Activated CD4-positive, alpha-beta memory T cell treated with anti-CD3 and anti-CD28 coated beads for 36 hours (primary cell): ENCODE measurements at regions of chr3 and their contacts with region 1.

Region 1: GRCh38 chr3:149717391-149718056 is 34.8 kb downstream of the COMMD2 start:
- DNase-seq: peak; percentile 39
- H3K4me3 Mint-ChIP-seq: no peak overlapping the region
- H3K27ac Mint-ChIP-seq: no peak overlapping the region
- H3K4me1 Mint-ChIP-seq: peaks cover 2% of the 10 kb centered on the region
- H3K27me3 Mint-ChIP-seq: peaks cover under 1% of the 10 kb centered on the region

Region 2: DNA sequence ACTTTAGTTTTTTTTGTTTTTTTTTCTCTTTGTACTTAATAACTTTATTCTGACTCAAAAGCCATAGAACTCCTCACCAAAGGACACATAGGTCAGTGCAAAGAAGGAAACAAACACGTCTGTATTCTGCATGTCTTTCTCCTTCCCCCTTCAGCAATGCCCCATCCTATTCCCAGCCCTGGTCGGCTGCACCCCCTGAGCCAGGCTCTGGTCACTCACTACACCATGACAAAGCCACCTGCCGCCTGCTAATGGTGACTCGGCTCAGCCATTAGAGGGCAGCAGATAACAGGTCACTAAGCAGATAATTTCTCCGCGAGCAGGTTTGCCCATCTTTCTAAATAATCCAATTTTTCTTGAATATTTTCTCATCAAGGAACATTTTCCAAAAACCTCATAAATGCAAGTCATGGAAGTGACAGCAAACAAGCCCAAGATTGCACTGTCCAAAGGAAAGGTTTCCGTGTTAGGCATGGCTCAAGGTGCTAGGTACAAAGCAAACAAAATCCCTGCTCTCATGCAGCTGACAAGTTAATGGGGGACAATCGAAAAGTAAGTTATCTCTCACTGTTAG is 205.2 kb before region 1 on chr3:
- CTCF ChIA-PET with region 1: interaction called, 6 read pairs
- POLR2A ChIA-PET with region 1: no interaction called
- intact Hi-C with region 1: loop called (anchors 1 kb)
- DNase-seq: peak; percentile 51
- H3K4me3 Mint-ChIP-seq: no peak overlapping the region
- H3K27ac Mint-ChIP-seq: no peak overlapping the region
- H3K4me1 Mint-ChIP-seq: peaks cover 10% of the 10 kb centered on the region
- H3K27me3 Mint-ChIP-seq: peaks cover 15% of the 10 kb centered on the region

Region 3: GRCh38 chr3:149536429-149536828 is 181.1 kb before region 1 on chr3:
- CTCF ChIA-PET with region 1: interaction called, 14 read pairs
- POLR2A ChIA-PET with region 1: no interaction called
- intact Hi-C with region 1: no loop called
- DNase-seq: no peak
- H3K4me3 Mint-ChIP-seq: no peak overlapping the region
- H3K27ac Mint-ChIP-seq: no peak overlapping the region
- H3K4me1 Mint-ChIP-seq: no peaks in the 10 kb centered on the region
- H3K27me3 Mint-ChIP-seq: no peaks in the 10 kb centered on the region

Region 4: GRCh38 chr3:149566292-149566975 is 151.1 kb before region 1 on chr3:
- CTCF ChIA-PET with region 1: interaction called, 57 read pairs
- POLR2A ChIA-PET with region 1: no interaction called
- intact Hi-C with region 1: loop called (anchors 1 kb)
- DNase-seq: no peak
- H3K4me3 Mint-ChIP-seq: no peak overlapping the region
- H3K27ac Mint-ChIP-seq: no peak overlapping the region
- H3K4me1 Mint-ChIP-seq: no peaks in the 10 kb centered on the region
- H3K27me3 Mint-ChIP-seq: peaks cover 4% of the 10 kb centered on the region

Region 5: GRCh38 chr3:149657926-149658733 is 59.4 kb before region 1 on chr3 and contains the start of gene WWTR1:
- CTCF ChIA-PET with region 1: no interaction called
- POLR2A ChIA-PET with region 1: no interaction called
- intact Hi-C with region 1: loop called (anchors 2 kb)
- DNase-seq: peak; percentile 65
- H3K4me3 Mint-ChIP-seq: peak within 1 kb of the TSS; percentile 82
- H3K27ac Mint-ChIP-seq: no peak within 1 kb of the TSS
- H3K4me1 Mint-ChIP-seq: peaks cover 9% of the 10 kb centered on the region
- H3K27me3 Mint-ChIP-seq: peaks cover 51% of the 10 kb centered on the region
- total RNA-seq, gene WWTR1: 1.0 to 1.2 TPM

Region 6: GRCh38 chr3:150348500-150348899 is 631.0 kb after region 1 on chr3:
- CTCF ChIA-PET with region 1: no interaction called
- POLR2A ChIA-PET with region 1: no interaction called
- intact Hi-C with region 1: no loop called
- DNase-seq: peak; percentile 47
- H3K4me3 Mint-ChIP-seq: no peak overlapping the region
- H3K27ac Mint-ChIP-seq: no peak overlapping the region
- H3K4me1 Mint-ChIP-seq: peaks cover 3% of the 10 kb centered on the region
- H3K27me3 Mint-ChIP-seq: peaks cover 5% of the 10 kb centered on the region